CD4-positive, alpha-beta T cell (primary cell): ENCODE measurements at regions of chr10 and their contacts with region 1.

Region 1: GRCh38 chr10:9302120-9302746 is 1247.7 kb downstream of the GATA3 start:
- DNase-seq: peak in 4 of 14 experiments; percentile 25 to 70 (median 64)
- ATAC-seq: peak; percentile 49
- H3K4me3 ChIP-seq: no peak overlapping the region
- H3K4me3 Mint-ChIP-seq: no peak overlapping the region
- H3K27ac ChIP-seq: no peak overlapping the region
- H3K27ac Mint-ChIP-seq: no peak overlapping the region
- H3K4me1 ChIP-seq: no peaks in the 10 kb centered on the region
- H3K4me1 Mint-ChIP-seq: no peaks in the 10 kb centered on the region
- H3K27me3 ChIP-seq: no peaks in the 10 kb centered on the region
- H3K27me3 Mint-ChIP-seq: peaks cover 19% of the 10 kb centered on the region
- CTCF ChIP-seq: peak; percentile 64

Region 2: GRCh38 chr10:7750222-7750621 is 1552.0 kb before region 1 on chr10:
- CTCF ChIA-PET with region 1: no interaction called
- POLR2A ChIA-PET with region 1: no interaction called
- intact Hi-C with region 1: loop called in 1 of 2 experiments (anchors 5 kb)
- DNase-seq: no peak
- ATAC-seq: no peak
- H3K4me3 ChIP-seq: no peak overlapping the region
- H3K4me3 Mint-ChIP-seq: no peak overlapping the region
- H3K27ac ChIP-seq: no peak overlapping the region
- H3K27ac Mint-ChIP-seq: no peak overlapping the region
- H3K4me1 ChIP-seq: no peaks in the 10 kb centered on the region
- H3K4me1 Mint-ChIP-seq: no peaks in the 10 kb centered on the region
- H3K27me3 ChIP-seq: no peaks in the 10 kb centered on the region
- H3K27me3 Mint-ChIP-seq: no peaks in the 10 kb centered on the region
- CTCF ChIP-seq: no peak

Region 3: GRCh38 chr10:7756360-7756992 is 1545.8 kb before region 1 on chr10:
- CTCF ChIA-PET with region 1: no interaction called
- POLR2A ChIA-PET with region 1: no interaction called
- intact Hi-C with region 1: loop called (anchors 1 to 5 kb)
- DNase-seq: peak in 7 of 14 experiments; percentile 4 to 42 (median 15)
- ATAC-seq: no peak
- H3K4me3 ChIP-seq: no peak overlapping the region
- H3K4me3 Mint-ChIP-seq: no peak overlapping the region
- H3K27ac ChIP-seq: no peak overlapping the region
- H3K27ac Mint-ChIP-seq: no peak overlapping the region
- H3K4me1 ChIP-seq: no peaks in the 10 kb centered on the region
- H3K4me1 Mint-ChIP-seq: no peaks in the 10 kb centered on the region
- H3K27me3 ChIP-seq: no peaks in the 10 kb centered on the region
- H3K27me3 Mint-ChIP-seq: no peaks in the 10 kb centered on the region
- CTCF ChIP-seq: peak; percentile 42

Region 4: DNA sequence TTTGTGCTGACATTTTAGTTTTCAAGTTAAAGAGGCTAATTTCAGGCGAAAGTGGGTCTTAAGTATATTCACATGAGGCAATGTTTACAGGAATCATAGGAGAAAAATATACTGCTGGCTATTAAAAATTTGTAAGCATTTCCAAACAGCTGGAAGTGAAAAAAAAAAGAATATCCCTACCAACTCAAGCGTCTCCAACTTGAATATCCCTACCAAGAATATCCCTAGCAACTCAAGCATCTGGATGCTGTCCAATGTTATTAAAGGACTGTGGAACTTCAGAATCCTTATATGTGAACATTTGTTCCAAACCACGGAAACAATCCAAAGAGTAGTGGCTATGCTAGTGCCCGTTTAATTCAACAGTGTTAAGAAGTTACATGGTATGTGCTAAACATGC is 55.2 kb after region 1 on chr10:
- CTCF ChIA-PET with region 1: no interaction called
- POLR2A ChIA-PET with region 1: no interaction called
- intact Hi-C with region 1: no loop called
- DNase-seq: no peak
- ATAC-seq: no peak
- H3K4me3 ChIP-seq: no peak overlapping the region
- H3K4me3 Mint-ChIP-seq: no peak overlapping the region
- H3K27ac ChIP-seq: no peak overlapping the region
- H3K27ac Mint-ChIP-seq: no peak overlapping the region
- H3K4me1 ChIP-seq: peaks cover 1% of the 10 kb centered on the region
- H3K4me1 Mint-ChIP-seq: peaks cover 8% of the 10 kb centered on the region
- H3K27me3 ChIP-seq: no peaks in the 10 kb centered on the region
- H3K27me3 Mint-ChIP-seq: peaks cover 6% of the 10 kb centered on the region
- CTCF ChIP-seq: no peak